Gastrocnemius medialis (tissue), 4 donors: ENCODE measurements at regions of chr12 and their contacts with region 1.

Region 1: GRCh38 chr12:76083904-76084862 is at the start of gene NAP1L1:
- DNase-seq: peak; percentile 97
- ATAC-seq: peak; percentile 94 to 95
- H3K4me3 ChIP-seq: peak within 1 kb of the TSS; percentile 79 to 97 (median 92)
- H3K27ac ChIP-seq: peak within 1 kb of the TSS; percentile 93 to 99 (median 96)
- H3K4me1 ChIP-seq: peaks cover 27 to 30% of the 10 kb centered on the region in 2 donors
- H3K27me3 ChIP-seq: no peaks in the 10 kb centered on the region
- CTCF ChIP-seq: peak in 1 of 5 experiments; percentile 18
- POLR2A ChIP-seq: peak; percentile 90 to 97
- total RNA-seq, gene NAP1L1: 336 to 660 (median 421) TPM

Region 2: DNA sequence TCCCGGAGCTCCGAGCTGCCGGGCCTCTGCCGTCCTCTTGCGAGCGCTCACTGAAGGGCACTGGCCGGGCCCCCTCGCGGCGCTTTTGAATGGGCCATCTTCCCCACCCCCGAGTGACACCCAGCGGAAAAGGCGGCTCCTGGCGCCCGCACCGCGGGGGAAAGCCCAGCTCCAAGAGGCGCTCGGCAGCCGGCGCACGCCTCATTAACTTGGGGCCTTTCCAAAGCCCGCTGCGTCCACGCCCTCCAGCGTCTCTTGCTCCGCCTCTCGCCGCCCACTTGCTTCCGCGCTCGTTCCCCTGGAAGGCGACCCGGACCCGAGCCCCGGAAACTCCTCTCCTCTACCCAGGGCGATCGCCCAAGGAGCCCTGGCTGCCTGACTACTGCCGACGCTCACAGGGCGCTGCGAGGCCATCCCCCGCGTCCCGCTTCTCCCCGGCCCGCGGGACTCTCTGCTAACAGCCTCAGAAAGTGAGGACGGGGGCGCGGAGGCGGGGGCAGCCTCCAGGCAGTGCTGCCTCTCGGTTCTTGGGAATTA is 52.6 kb before region 1 on chr12 and contains the start of gene PHLDA1:
- in situ Hi-C with region 1: no loop called
- intact Hi-C with region 1: loop called (anchors 5 kb)
- DNase-seq: peak; percentile 84 to 86
- ATAC-seq: peak; percentile 73 to 80
- H3K4me3 ChIP-seq: peak within 1 kb of the TSS; percentile 77 to 88 (median 85)
- H3K27ac ChIP-seq: peak within 1 kb of the TSS; percentile 86 to 95 (median 92)
- H3K4me1 ChIP-seq: peaks cover 8 to 20% of the 10 kb centered on the region in 2 donors
- H3K27me3 ChIP-seq: peaks cover 0 to 40% (median 22%) of the 10 kb centered on the region in 3 donors
- CTCF ChIP-seq: peak; percentile 29 to 63 (median 55)
- POLR2A ChIP-seq: peak; percentile 64 to 91
- total RNA-seq, gene PHLDA1: 2.4 to 32.7 (median 7.9) TPM

Region 3: GRCh38 chr12:76348079-76348901 is 264.1 kb after region 1 on chr12 and contains the start of gene BBS10:
- in situ Hi-C with region 1: loop called (anchors 10 to 25 kb)
- intact Hi-C with region 1: loop called (anchors 1 kb)
- DNase-seq: peak; percentile 83 to 91
- ATAC-seq: peak; percentile 91 to 96
- H3K4me3 ChIP-seq: peak within 1 kb of the TSS; percentile 68 to 91 (median 82)
- H3K27ac ChIP-seq: peak within 1 kb of the TSS; percentile 83 to 92 (median 88)
- H3K4me1 ChIP-seq: peaks cover 30 to 39% of the 10 kb centered on the region in 2 donors
- H3K27me3 ChIP-seq: no peaks in the 10 kb centered on the region
- CTCF ChIP-seq: peak in 4 of 5 experiments; percentile 34 to 56 (median 46)
- POLR2A ChIP-seq: peak; percentile 43 to 60
- total RNA-seq, gene BBS10: 9.0 to 17.5 (median 11.5) TPM

Region 4: GRCh38 chr12:76559400-76560085 is 475.4 kb after region 1 on chr12 and contains the start of gene OSBPL8:
- in situ Hi-C with region 1: loop called in 2 of 4 experiments (anchors 25 kb)
- intact Hi-C with region 1: loop called (anchors 10 kb)
- DNase-seq: peak; percentile 90 to 95
- ATAC-seq: peak; percentile 90 to 94
- H3K4me3 ChIP-seq: peak within 1 kb of the TSS; percentile 90 to 100 (median 98)
- H3K27ac ChIP-seq: peak within 1 kb of the TSS; percentile 93 to 99 (median 95)
- H3K4me1 ChIP-seq: peaks cover 12 to 35% of the 10 kb centered on the region in 2 donors
- H3K27me3 ChIP-seq: no peaks in the 10 kb centered on the region
- CTCF ChIP-seq: peak; percentile 23 to 48 (median 37)
- POLR2A ChIP-seq: peak; percentile 85 to 94
- total RNA-seq, gene OSBPL8: 25.6 to 46.0 (median 43.4) TPM

Region 5: DNA sequence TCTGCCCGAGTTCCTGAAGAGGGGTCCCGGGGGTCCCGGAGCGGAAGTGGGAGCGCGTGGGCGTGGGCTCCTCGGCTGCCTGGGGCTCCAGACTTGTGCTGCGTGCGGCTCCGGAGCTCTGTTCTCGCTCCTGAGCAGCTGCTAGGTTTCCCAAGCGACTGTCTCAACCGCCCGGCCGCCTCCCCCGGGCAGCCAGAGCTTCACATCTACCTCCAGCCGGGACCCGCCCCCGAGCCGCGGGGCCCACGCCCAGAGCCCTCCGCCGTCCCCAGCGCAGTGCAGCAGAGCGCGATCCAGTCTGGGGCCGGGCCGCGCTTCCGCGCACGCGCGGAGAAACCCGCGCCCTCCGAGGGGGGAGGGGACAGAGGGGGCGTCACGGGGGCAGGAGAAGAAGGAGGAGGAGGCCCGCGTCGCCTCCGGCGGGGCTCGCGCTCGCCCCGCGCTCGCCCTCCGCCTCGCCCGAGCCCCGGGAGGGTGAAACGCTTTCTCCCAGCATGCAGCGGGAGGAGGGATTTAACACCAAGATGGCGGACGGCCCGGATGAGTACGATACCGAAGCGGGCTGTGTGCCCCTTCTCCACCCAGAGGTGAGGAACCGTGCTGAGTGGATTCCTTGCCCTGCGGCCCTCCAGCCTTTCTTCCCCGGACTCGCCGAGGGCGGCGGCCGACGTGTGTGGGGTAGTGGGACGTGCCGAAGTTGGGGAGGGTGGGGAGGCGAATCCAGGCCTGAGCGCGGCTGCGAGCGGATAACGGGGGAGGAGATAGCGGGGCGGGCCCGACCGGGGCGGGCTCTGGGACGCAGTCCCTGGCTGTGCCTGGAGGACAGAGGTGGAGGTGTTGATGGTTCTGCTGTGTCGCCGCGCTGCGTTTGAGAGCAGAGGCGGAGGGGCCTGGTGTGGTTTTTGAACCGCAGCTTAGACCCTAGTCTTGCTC is 679.8 kb after region 1 on chr12 and contains the start of gene ZDHHC17:
- in situ Hi-C with region 1: loop called in 1 of 4 experiments (anchors 25 kb)
- intact Hi-C with region 1: loop called (anchors 5 kb)
- DNase-seq: peak; percentile 80 to 92
- ATAC-seq: peak; percentile 85 to 87
- H3K4me3 ChIP-seq: peak within 1 kb of the TSS; percentile 75 to 99 (median 86)
- H3K27ac ChIP-seq: peak within 1 kb of the TSS; percentile 92 to 100 (median 98)
- H3K4me1 ChIP-seq: peaks cover 26 to 41% of the 10 kb centered on the region in 2 donors
- H3K27me3 ChIP-seq: no peaks in the 10 kb centered on the region
- CTCF ChIP-seq: peak in 1 of 5 experiments; percentile 14
- POLR2A ChIP-seq: peak; percentile 70 to 79
- total RNA-seq, gene ZDHHC17: 15.5 to 35.6 (median 19.3) TPM